ENCODE measurements at regions of chr13 and their contacts with region 1.

Region 1: GRCh38 chr13:70568571-70568970 is 460.3 kb upstream of the KLHL1 start:
- DNase-seq: no peak
- ATAC-seq: no peak
- H3K4me3 ChIP-seq: no peak overlapping the region
- H3K27ac ChIP-seq: no peak overlapping the region
- H3K4me1 ChIP-seq: no peaks in the 10 kb centered on the region
- H3K27me3 ChIP-seq: no peaks in the 10 kb centered on the region
- CTCF ChIP-seq: peak in 4 of 5 experiments; percentile 1 to 50 (median 42)
- POLR2A ChIP-seq: no peak

Region 2: GRCh38 chr13:69524459-69525155 is 1044.0 kb before region 1 on chr13:
- in situ Hi-C with region 1: loop called in 1 of 4 experiments (anchors 25 kb)
- intact Hi-C with region 1: no loop called
- DNase-seq: no peak
- ATAC-seq: no peak
- H3K4me3 ChIP-seq: no peak overlapping the region
- H3K27ac ChIP-seq: no peak overlapping the region
- H3K4me1 ChIP-seq: no peaks in the 10 kb centered on the region
- H3K27me3 ChIP-seq: no peaks in the 10 kb centered on the region
- CTCF ChIP-seq: no peak
- POLR2A ChIP-seq: no peak

Region 3: DNA sequence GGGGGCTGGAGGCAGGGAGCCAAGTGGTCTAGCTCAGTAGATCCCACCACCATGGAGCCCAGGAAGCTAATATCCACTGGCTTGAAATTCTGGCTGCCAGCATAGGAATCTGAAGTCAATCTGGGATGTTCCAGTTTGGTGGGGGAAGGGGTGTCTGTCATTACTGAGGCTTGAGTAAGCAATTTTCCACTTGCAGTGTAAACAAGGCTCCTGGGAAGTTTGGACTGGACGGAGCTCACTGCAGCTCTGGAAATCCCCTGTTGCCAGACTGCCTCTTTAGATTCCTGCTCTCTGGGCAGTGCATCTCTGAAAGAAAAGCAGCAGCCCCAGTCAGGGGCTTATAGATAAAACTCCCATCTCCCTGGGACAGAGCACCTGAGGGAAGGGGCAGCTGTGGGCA is 111.1 kb before region 1 on chr13:
- in situ Hi-C with region 1: loop called in 1 of 4 experiments (anchors 25 kb)
- intact Hi-C with region 1: no loop called
- DNase-seq: no peak
- ATAC-seq: no peak
- H3K4me3 ChIP-seq: no peak overlapping the region
- H3K27ac ChIP-seq: no peak overlapping the region
- H3K4me1 ChIP-seq: no peaks in the 10 kb centered on the region
- H3K27me3 ChIP-seq: no peaks in the 10 kb centered on the region
- CTCF ChIP-seq: no peak
- POLR2A ChIP-seq: no peak